Aorta (tissue), 5 donors: ENCODE measurements at regions of chr11 and their contacts with region 1.

Region 1: GRCh38 chr11:1271002-1271401 is 38.4 kb downstream of the TOLLIP start:
- DNase-seq: no peak
- ATAC-seq: no peak
- H3K4me3 ChIP-seq: no peak overlapping the region
- H3K27ac ChIP-seq: no peak overlapping the region
- H3K4me1 ChIP-seq: no peaks in the 10 kb centered on the region
- H3K27me3 ChIP-seq: no peaks in the 10 kb centered on the region

Region 2: GRCh38 chr11:1138093-1138492 is 132.9 kb before region 1 on chr11:
- intact Hi-C with region 1: no loop called
- DNase-seq: no peak
- ATAC-seq: no peak
- H3K4me3 ChIP-seq: no peak overlapping the region
- H3K27ac ChIP-seq: no peak overlapping the region
- H3K4me1 ChIP-seq: no peaks in the 10 kb centered on the region
- H3K27me3 ChIP-seq: no peaks in the 10 kb centered on the region

Region 3: DNA sequence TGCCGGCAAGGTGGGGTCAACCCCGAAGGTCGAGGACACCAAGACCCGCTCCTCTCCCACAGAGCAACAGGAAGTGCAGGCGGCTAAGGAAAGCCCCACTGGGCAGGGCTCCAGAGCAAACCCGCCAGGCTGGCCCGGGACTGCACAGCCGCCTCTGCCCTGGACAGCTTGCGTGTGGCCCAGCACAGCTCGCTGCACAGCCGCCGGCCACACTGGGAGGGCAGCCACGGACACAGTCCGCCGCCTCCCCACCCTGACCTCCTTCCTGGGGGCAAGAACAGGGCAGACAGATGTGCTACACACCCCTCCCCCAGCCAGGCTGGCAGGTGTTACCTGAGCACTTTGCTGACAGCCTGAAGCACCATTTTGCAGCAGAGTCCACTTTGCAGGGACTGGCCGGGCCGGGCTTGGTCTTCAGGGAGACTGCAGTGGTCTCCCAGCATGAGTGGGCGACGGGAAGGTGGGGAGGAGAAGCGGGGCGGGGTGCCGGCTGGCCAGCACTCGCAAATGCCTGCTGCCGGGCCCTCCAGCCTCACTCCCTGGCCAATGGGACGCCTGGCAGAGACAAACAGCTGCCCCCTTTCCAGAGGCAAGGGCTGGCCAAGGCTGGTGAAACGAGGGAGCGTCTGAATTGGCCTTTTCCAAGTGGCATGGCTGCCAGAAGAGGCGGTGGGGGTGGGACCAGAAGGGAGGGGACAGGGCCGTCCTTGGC is 215.3 kb after region 1 on chr11 and contains the start of gene MOB2:
- intact Hi-C with region 1: loop called in 1 of 2 experiments (anchors 10 kb)
- DNase-seq: peak; percentile 78 to 87
- ATAC-seq: peak; percentile 62
- H3K4me3 ChIP-seq: peak within 1 kb of the TSS; percentile 15 to 27
- H3K27ac ChIP-seq: peak within 1 kb of the TSS; percentile 1 to 50
- H3K4me1 ChIP-seq: no peaks in the 10 kb centered on the region
- H3K27me3 ChIP-seq: no peaks in the 10 kb centered on the region
- total RNA-seq, gene MOB2: 51.3 to 65.8 TPM